ENCODE measurements at regions of chr11 and their contacts with region 1.

Region 1: DNA sequence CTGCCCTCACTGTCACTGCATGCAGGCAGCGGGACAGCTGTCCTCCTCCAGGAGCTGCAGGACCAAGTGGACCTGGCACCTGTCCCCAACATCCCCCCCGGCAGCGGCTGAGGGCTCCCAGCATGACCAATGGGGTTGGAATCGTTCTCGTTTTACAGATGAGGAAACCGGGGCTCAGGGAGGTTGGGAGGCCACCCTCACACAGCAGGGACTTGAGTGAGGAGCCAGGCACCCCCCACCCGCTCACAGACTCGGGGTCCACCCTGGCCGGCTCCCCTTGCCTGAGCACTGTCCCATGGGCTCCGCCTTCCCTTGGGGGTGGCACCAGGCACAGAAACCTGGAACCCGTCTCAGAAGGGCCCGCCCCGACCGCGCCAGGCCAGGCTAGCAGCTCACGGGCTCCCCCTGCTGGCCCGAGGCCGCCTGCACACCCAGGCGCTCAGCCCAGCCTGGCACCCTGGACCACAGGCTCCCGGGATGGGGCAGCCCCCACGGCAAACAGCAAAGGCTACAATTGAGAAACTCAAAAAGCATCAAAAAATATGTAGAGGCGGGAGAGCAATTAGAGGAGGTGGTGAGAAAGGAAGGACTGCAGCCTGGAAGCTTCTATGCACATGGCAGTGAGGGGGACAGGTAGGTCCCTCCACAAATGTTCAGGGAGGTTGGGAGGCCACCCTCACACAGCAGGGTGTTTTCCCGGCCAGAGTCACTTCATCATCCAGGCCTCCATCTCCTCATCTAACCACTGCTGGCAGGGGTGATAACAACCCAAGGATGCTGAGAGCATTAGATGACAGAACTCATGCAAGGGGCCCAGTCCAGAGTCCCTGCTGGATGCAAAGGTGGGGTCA is 12.8 kb downstream of the MACROD1 start:
- DNase-seq: peak; percentile 58 to 86 (median 64)
- ATAC-seq: peak; percentile 9 to 58 (median 50)
- H3K4me3 ChIP-seq: no peak overlapping the region
- H3K27ac ChIP-seq: no peak overlapping the region
- H3K4me1 ChIP-seq: peaks cover 0 to 75% (median 21%) of the 10 kb centered on the region in 12 donors
- H3K27me3 ChIP-seq: no peaks in the 10 kb centered on the region
- CTCF ChIP-seq: peak; percentile 97 to 100 (median 99)
- POLR2A ChIP-seq: no peak

Region 2: DNA sequence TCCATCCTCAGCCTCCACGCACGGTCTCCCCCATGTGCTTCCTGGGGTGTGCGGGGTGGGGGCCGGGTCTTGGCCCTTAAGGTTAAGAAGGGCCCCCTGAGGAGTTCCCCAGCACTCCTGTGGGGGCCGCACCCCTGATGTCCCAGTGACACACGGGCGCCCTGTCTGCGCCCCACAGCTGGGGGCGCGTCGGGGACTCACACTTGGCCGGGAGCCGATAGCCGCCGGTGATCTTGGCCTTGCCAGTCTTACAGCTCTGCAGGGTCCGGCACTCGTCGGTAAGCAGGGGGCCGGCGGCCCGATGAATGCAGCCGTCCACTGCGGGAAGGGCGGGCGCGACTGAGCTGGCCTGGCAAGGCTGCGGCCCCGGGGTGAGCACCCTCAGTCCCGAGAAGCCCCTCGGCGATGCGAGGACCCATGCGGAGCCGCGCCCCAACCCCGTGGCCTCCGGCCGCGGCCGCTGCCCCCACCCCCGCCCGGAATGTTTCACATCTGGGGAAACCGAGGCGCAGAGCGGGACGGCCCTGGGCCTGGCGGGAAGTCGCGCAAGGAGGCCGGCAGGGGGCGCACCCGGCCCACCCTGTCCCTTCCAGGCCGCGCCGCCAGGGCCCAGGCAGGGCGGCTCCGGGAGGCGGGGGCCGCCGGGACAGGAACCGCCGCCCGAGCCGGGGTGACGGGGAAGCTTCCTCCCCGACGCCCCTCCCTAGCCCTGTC is 152.9 kb before region 1 on chr11:
- intact Hi-C with region 1: loop called (anchors 1 to 2 kb)
- DNase-seq: peak; percentile 67 to 88 (median 78)
- ATAC-seq: peak; percentile 46 to 87 (median 78)
- H3K4me3 ChIP-seq: peak overlapping the region; percentile 25 to 60 (median 50)
- H3K27ac ChIP-seq: peak overlapping the region in 3 of 12 donors; percentile 28 to 47 (median 32)
- H3K4me1 ChIP-seq: peaks cover 0 to 43% (median 35%) of the 10 kb centered on the region in 12 donors
- H3K27me3 ChIP-seq: peaks cover 0 to 21% (median 0%) of the 10 kb centered on the region in 9 donors
- CTCF ChIP-seq: peak; percentile 70 to 91 (median 82)
- POLR2A ChIP-seq: peak in 1 of 2 donors; percentile 16

Region 3: GRCh38 chr11:64216879-64217278 is 63.8 kb after region 1 on chr11:
- intact Hi-C with region 1: no loop called
- DNase-seq: peak in 2 of 5 donors; percentile 8 to 9
- ATAC-seq: no peak
- H3K4me3 ChIP-seq: no peak overlapping the region
- H3K27ac ChIP-seq: no peak overlapping the region
- H3K4me1 ChIP-seq: no peaks in the 10 kb centered on the region
- H3K27me3 ChIP-seq: no peaks in the 10 kb centered on the region
- CTCF ChIP-seq: no peak
- POLR2A ChIP-seq: no peak

Region 4: DNA sequence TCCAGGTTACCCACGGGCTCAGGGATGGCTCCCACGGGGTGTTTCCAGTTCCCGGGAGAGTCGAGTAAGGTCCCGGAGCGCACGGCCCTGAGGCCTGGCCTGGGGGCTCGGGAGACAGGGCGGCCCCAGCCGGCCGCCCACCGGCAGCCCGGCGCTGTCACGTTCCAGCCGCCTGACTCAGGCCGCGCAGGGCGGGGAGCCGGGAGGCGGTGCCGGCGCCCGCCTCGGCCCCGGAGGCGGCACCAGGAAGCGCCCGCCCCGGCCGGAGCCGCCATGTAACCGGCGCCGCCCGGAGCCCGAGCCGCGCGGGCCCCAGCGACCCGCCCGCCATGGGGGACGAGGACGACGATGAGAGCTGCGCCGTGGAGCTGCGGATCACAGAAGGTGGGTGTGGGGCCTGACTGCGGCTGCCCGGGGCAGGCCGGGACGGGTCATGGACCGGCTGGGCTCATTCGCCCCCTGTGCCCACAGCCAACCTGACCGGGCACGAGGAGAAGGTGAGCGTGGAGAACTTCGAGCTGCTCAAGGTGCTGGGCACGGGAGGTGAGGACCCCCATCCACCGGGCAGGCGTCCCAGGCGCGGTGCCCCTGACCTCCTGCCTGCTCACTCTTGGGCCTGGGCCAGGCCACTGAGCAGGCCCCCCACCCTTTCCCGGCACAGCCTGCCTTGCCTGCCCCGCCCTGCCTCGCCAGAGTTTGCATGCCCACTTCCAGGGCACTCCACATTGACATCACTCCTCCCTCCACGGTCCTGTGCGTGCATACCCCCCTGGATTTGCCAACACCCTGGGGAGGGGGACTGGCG is 206.0 kb after region 1 on chr11 and contains the start of gene RPS6KA4:
- intact Hi-C with region 1: no loop called
- DNase-seq: peak; percentile 73 to 85 (median 74)
- ATAC-seq: peak; percentile 33 to 84 (median 78)
- H3K4me3 ChIP-seq: peak within 1 kb of the TSS; percentile 68 to 94 (median 84)
- H3K27ac ChIP-seq: peak within 1 kb of the TSS; percentile 78 to 95 (median 92)
- H3K4me1 ChIP-seq: peaks cover 3 to 47% (median 30%) of the 10 kb centered on the region in 12 donors
- H3K27me3 ChIP-seq: no peaks in the 10 kb centered on the region
- CTCF ChIP-seq: peak in 1 of 12 donors; percentile 19
- POLR2A ChIP-seq: peak in 1 of 2 donors; percentile 72
- total RNA-seq, gene RPS6KA4: 12.8 to 32.5 (median 18.3) TPM